Breast epithelium (tissue), 4 donors: ENCODE measurements at regions of chr13 and their contacts with region 1.

Region 1: DNA sequence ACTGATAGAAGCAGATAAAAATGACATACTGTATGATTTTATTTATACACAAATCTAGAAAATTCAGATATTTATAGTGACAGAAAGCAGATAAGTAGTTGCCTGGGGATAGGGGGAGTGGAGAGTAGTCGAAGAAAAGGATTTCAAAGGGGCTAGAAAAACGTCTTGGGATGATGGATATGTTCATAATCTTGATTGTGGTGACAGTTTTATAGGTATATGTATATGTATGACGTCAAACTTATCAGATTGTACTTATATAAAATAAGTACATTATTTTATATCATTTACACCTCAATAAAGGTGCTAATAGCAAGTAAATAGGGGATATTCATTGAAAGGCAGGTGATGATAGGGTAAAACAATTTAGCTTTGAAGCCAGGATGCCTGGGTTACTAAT is 380.1 kb downstream of the KCNRG start:
- DNase-seq: no peak
- H3K4me3 ChIP-seq: no peak overlapping the region
- H3K27ac ChIP-seq: no peak overlapping the region
- H3K4me1 ChIP-seq: no peaks in the 10 kb centered on the region
- H3K27me3 ChIP-seq: no peaks in the 10 kb centered on the region
- CTCF ChIP-seq: no peak
- POLR2A ChIP-seq: no peak

Region 2: DNA sequence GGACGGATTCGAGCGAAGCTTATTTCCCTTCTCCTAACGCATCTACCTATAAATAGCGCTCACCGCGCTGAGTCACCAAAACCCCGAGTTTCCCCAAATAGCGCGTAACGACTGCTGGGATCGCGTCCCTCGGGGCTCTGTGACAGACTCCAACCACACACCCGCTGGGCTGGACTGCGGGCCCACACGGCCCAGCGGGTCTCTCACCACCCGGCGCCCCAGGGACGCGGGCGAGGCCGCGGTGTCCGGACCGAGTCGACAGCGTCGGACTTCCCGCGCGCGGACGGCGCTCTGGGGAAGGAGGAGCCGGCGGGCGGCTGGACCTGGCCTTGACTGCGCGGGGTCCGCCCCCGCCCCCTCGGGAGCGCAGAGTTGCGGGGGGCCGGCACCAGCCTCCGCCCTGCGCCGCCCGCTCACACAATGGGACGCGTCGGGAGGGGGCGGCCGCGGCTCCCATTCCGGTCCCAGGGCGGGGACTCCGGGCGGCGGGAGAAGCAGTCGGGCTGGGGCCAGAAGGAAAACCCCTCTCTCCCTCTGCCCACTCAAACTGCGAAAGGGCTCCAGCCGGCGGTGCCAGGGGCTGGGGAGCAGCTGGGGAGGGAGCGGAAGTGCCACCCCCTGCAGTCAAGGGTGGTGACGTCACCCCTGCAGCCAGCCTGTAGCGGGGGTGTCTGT is 271.3 kb before region 1 on chr13:
- intact Hi-C with region 1: no loop called
- DNase-seq: peak; percentile 67 to 96
- H3K4me3 ChIP-seq: peak overlapping the region; percentile 90 to 99 (median 97)
- H3K27ac ChIP-seq: peak overlapping the region; percentile 98 to 99
- H3K4me1 ChIP-seq: no peaks in the 10 kb centered on the region
- H3K27me3 ChIP-seq: peaks cover 0 to 26% of the 10 kb centered on the region in 2 donors
- CTCF ChIP-seq: no peak
- POLR2A ChIP-seq: peak; percentile 60

Region 3: GRCh38 chr13:50323440-50324130 is 71.7 kb before region 1 on chr13:
- intact Hi-C with region 1: no loop called
- DNase-seq: no peak
- H3K4me3 ChIP-seq: no peak overlapping the region
- H3K27ac ChIP-seq: no peak overlapping the region
- H3K4me1 ChIP-seq: no peaks in the 10 kb centered on the region
- H3K27me3 ChIP-seq: no peaks in the 10 kb centered on the region
- CTCF ChIP-seq: no peak
- POLR2A ChIP-seq: no peak

Region 4: GRCh38 chr13:50374517-50374916 is 20.8 kb before region 1 on chr13:
- intact Hi-C with region 1: loop called (anchors 1 kb)
- DNase-seq: no peak
- H3K4me3 ChIP-seq: no peak overlapping the region
- H3K27ac ChIP-seq: no peak overlapping the region
- H3K4me1 ChIP-seq: no peaks in the 10 kb centered on the region
- H3K27me3 ChIP-seq: no peaks in the 10 kb centered on the region
- CTCF ChIP-seq: no peak
- POLR2A ChIP-seq: no peak

Region 5: GRCh38 chr13:51034906-51035305 is 639.6 kb after region 1 on chr13:
- intact Hi-C with region 1: no loop called
- DNase-seq: no peak
- H3K4me3 ChIP-seq: no peak overlapping the region
- H3K27ac ChIP-seq: no peak overlapping the region
- H3K4me1 ChIP-seq: no peaks in the 10 kb centered on the region
- H3K27me3 ChIP-seq: no peaks in the 10 kb centered on the region
- CTCF ChIP-seq: no peak
- POLR2A ChIP-seq: no peak